Right cardiac atrium (tissue), 5 donors: ENCODE measurements at regions of chr1 and their contacts with region 1.

Region 1: GRCh38 chr1:66764994-66765578 is 12.8 kb downstream of the DYNLT5 start:
- DNase-seq: no peak
- ATAC-seq: peak in 1 of 2 donors; percentile 42
- H3K4me3 ChIP-seq: no peak overlapping the region
- H3K27ac ChIP-seq: no peak overlapping the region
- H3K4me1 ChIP-seq: no peaks in the 10 kb centered on the region
- H3K27me3 ChIP-seq: no peaks in the 10 kb centered on the region

Region 2: DNA sequence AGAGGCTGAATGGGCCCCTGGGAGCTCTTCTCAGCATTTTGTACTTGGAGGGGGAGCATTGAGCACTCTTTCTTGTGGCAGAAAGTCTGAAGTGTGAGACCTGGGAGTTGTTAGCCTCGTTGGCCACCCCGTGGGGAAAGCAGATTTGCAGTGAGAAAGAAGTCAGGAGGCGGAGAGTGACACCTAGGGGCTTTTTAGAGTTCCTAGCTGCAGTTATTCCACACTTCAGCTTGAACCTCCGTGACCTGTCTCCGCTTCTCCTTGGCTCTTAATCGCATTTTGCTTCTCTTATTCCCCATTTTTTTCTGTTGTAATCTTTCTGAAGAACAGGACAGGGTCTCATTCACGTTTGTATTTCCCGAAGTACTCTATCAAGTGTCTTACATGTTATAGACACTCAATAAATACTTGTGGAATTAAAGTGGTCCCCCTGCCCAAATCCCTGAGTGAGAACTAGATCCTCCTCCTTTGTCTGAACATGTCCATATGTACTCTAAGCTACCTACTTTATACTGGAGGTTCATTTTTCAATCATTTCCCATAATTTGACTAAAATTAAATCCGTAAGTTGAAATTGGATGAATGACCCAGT is 384.2 kb after region 1 on chr1:
- intact Hi-C with region 1: loop called in 3 of 4 experiments (anchors 10 kb)
- DNase-seq: peak; percentile 65 to 76 (median 65)
- ATAC-seq: peak; percentile 93
- H3K4me3 ChIP-seq: no peak overlapping the region
- H3K27ac ChIP-seq: no peak overlapping the region
- H3K4me1 ChIP-seq: no peaks in the 10 kb centered on the region
- H3K27me3 ChIP-seq: no peaks in the 10 kb centered on the region

Region 3: DNA sequence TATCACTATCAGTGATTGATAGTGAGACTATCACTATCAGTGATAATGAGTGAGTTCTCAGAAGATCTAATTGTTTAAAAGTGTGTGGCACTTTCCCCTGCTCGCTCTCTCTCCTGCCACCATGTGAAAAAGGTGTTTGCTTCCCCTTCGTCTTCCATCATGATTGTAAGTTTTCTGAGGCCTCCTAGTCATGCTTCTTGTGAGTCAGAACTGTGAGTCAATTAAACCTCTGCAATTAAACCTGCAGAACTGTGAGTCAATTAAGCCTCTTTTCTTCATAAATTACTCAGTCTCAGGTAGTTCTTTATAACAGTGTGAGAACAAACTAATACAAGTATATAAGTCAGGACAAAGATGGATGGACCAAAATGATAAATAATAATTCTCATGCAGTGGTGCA is 394.1 kb after region 1 on chr1:
- intact Hi-C with region 1: loop called in 1 of 4 experiments (anchors 10 kb)
- DNase-seq: no peak
- ATAC-seq: no peak
- H3K4me3 ChIP-seq: no peak overlapping the region
- H3K27ac ChIP-seq: no peak overlapping the region
- H3K4me1 ChIP-seq: no peaks in the 10 kb centered on the region
- H3K27me3 ChIP-seq: no peaks in the 10 kb centered on the region